ENCODE measurements at regions of chr14 and their contacts with region 1.

Region 1: GRCh38 chr14:56579345-56580220 is at the start of gene TMEM260:
- DNase-seq: peak; percentile 91
- H3K4me3 ChIP-seq: peak within 1 kb of the TSS; percentile 32 to 89 (median 81)
- H3K27ac ChIP-seq: peak within 1 kb of the TSS; percentile 73
- H3K4me1 ChIP-seq: peaks cover 8% of the 10 kb centered on the region
- H3K27me3 ChIP-seq: peaks cover 0 to under 1% of the 10 kb centered on the region in 2 experiments
- CTCF ChIP-seq: peak; percentile 86 to 88
- POLR2A ChIP-seq: peak; percentile 85
- total RNA-seq, gene TMEM260: 16.2 and 16.4 TPM in 2 replicates

Region 2: GRCh38 chr14:56394826-56395530 is 184.6 kb before region 1 on chr14:
- CTCF ChIA-PET with region 1: no interaction called
- POLR2A ChIA-PET with region 1: no interaction called
- dilution Hi-C with region 1: no loop called
- intact Hi-C with region 1: no loop called
- DNase-seq: peak; percentile 53
- H3K4me3 ChIP-seq: no peak overlapping the region
- H3K27ac ChIP-seq: no peak overlapping the region
- H3K4me1 ChIP-seq: no peaks in the 10 kb centered on the region
- H3K27me3 ChIP-seq: no peaks in the 10 kb centered on the region
- CTCF ChIP-seq: no peak
- POLR2A ChIP-seq: no peak

Region 3: DNA sequence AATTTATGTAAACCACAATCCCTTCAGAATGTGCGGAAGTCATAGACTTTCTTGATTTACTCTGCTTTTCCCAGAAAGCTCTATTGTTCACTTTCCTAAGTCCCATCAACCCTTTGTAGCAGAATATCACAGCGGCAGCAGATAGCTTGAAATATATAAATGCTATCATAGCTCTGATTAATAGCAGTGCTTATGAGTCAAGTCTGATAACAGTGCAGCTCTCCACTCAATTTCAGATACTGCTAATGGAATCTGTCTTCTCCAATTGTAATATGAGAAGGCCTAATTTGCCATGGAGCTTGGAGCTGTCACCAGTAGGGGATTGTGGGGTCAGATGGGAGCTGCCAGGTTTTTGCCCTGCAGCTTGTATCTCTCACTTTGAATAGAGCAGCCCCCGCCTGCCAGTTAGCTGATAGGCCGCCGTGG is 11.0 kb after region 1 on chr14:
- CTCF ChIA-PET with region 1: interaction called, 13 read pairs
- POLR2A ChIA-PET with region 1: interaction called, 3 read pairs
- dilution Hi-C with region 1: no loop called
- intact Hi-C with region 1: no loop called
- DNase-seq: no peak
- H3K4me3 ChIP-seq: no peak overlapping the region
- H3K27ac ChIP-seq: no peak overlapping the region
- H3K4me1 ChIP-seq: no peaks in the 10 kb centered on the region
- H3K27me3 ChIP-seq: no peaks in the 10 kb centered on the region
- CTCF ChIP-seq: no peak
- POLR2A ChIP-seq: no peak